PC-9 (cell line): ENCODE measurements at regions of chr2 and their contacts with region 1.

Region 1: DNA sequence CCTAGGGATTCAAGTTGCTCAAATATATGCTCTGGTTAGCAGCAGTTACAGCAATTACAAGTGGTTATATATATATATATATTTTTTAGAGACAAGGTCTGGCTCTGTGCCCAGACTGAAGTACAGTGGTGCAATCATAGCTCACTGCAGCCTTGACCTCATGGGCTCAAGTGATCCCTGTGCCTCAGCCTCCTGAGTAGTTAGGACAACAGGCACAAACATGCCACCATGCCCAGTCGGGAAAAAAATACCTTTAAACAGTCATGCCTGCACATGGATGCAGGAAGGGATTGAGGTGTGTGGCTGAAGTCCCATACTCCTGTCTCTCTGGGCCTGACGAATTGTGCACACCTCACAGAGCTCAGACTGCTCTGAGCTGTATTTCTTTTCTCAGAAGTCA is 19.6 kb upstream of the DNAH7 start:
- DNase-seq: no peak
- H3K4me3 ChIP-seq: no peak overlapping the region
- H3K27ac ChIP-seq: no peak overlapping the region
- H3K4me1 ChIP-seq: no peaks in the 10 kb centered on the region
- H3K27me3 ChIP-seq: no peaks in the 10 kb centered on the region
- CTCF ChIP-seq: no peak

Region 2: DNA sequence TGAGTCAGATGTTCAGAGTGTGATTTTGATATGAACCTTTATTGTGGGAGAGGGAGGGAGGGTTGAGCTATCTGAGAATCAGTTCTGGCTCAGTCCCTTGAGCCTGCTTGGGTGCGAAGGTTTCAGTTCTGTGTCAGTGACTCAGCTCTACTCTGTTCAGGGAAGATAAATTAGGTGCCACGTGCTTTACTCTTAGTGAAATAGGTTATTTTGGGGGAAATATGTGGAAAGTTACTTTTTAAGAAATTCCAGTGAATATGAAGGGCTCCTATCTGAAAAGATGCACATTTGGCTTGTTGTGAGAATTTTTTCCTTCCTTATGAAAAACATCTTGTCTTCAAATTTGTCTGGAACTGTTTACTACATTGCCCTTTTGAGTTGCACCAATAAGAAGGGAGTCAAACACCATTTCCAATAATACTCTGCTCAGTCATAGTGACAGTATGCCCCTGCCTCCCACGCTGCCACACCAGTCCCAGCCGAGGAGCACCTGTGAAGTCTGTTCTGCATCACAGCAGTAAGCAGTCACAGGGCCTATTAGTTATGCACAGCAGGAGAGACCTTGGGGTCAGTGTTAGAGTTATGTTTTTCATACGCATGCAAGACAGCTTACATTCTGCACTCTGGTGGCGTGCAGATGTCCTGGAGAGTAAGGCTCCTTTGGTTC is 13.3 kb after region 1 on chr2:
- CTCF ChIA-PET with region 1: no interaction called
- POLR2A ChIA-PET with region 1: no interaction called
- intact Hi-C with region 1: no loop called
- DNase-seq: no peak
- H3K4me3 ChIP-seq: no peak overlapping the region
- H3K27ac ChIP-seq: no peak overlapping the region
- H3K4me1 ChIP-seq: no peaks in the 10 kb centered on the region
- H3K27me3 ChIP-seq: no peaks in the 10 kb centered on the region
- CTCF ChIP-seq: no peak

Region 3: GRCh38 chr2:196113061-196113974 is 25.1 kb after region 1 on chr2:
- CTCF ChIA-PET with region 1: no interaction called
- POLR2A ChIA-PET with region 1: no interaction called
- intact Hi-C with region 1: no loop called
- DNase-seq: no peak
- H3K4me3 ChIP-seq: no peak overlapping the region
- H3K27ac ChIP-seq: no peak overlapping the region
- H3K4me1 ChIP-seq: no peaks in the 10 kb centered on the region
- H3K27me3 ChIP-seq: no peaks in the 10 kb centered on the region
- CTCF ChIP-seq: no peak

Region 4: GRCh38 chr2:196125596-196125995 is 37.4 kb after region 1 on chr2:
- CTCF ChIA-PET with region 1: interaction called, 16 read pairs
- POLR2A ChIA-PET with region 1: no interaction called
- intact Hi-C with region 1: no loop called
- DNase-seq: no peak
- H3K4me3 ChIP-seq: no peak overlapping the region
- H3K27ac ChIP-seq: no peak overlapping the region
- H3K4me1 ChIP-seq: no peaks in the 10 kb centered on the region
- H3K27me3 ChIP-seq: no peaks in the 10 kb centered on the region
- CTCF ChIP-seq: no peak

Region 5: GRCh38 chr2:196758474-196759377 is 670.5 kb after region 1 on chr2:
- CTCF ChIA-PET with region 1: interaction called, 10 read pairs
- POLR2A ChIA-PET with region 1: no interaction called
- intact Hi-C with region 1: no loop called
- DNase-seq: no peak
- H3K4me3 ChIP-seq: no peak overlapping the region
- H3K27ac ChIP-seq: no peak overlapping the region
- H3K4me1 ChIP-seq: no peaks in the 10 kb centered on the region
- H3K27me3 ChIP-seq: no peaks in the 10 kb centered on the region
- CTCF ChIP-seq: peak; percentile 54